ENCODE measurements at regions of chrX and their contacts with region 1.

Region 1: GRCh38 chrX:44244008-44244407 is 99.5 kb downstream of the EFHC2 start:
- DNase-seq: peak; percentile 58
- H3K4me3 Mint-ChIP-seq: no peak overlapping the region
- H3K27ac Mint-ChIP-seq: no peak overlapping the region
- H3K4me1 Mint-ChIP-seq: peaks cover 11% of the 10 kb centered on the region
- H3K27me3 Mint-ChIP-seq: no peaks in the 10 kb centered on the region

Region 2: DNA sequence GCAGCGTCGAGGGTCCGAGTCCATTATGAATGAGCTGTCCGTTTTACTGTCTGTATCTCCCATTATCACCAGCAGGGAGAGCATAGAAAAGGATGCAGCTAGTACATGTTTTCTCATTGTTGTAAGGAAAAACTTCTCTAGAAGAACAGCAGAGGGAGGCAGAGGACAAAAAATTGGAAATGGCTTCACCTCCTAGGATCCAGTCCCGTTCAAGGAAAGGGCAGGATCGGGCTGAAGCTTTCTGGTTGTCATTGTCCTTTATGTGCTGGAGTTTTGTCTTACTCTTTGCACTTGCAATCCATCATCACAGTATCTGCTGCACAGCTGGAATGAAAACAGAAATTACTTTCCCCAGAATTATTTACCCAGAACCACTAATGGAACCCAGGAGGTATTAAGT is 285.5 kb before region 1 on chrX:
- intact Hi-C with region 1: loop called (anchors 1 kb)
- DNase-seq: peak; percentile 71
- H3K4me3 Mint-ChIP-seq: no peak overlapping the region
- H3K27ac Mint-ChIP-seq: peak overlapping the region; percentile 20
- H3K4me1 Mint-ChIP-seq: peaks cover 5% of the 10 kb centered on the region
- H3K27me3 Mint-ChIP-seq: peaks cover 4% of the 10 kb centered on the region